Spleen (tissue), 13 donors: ENCODE measurements at regions of chr3 and their contacts with region 1.

Region 1: DNA sequence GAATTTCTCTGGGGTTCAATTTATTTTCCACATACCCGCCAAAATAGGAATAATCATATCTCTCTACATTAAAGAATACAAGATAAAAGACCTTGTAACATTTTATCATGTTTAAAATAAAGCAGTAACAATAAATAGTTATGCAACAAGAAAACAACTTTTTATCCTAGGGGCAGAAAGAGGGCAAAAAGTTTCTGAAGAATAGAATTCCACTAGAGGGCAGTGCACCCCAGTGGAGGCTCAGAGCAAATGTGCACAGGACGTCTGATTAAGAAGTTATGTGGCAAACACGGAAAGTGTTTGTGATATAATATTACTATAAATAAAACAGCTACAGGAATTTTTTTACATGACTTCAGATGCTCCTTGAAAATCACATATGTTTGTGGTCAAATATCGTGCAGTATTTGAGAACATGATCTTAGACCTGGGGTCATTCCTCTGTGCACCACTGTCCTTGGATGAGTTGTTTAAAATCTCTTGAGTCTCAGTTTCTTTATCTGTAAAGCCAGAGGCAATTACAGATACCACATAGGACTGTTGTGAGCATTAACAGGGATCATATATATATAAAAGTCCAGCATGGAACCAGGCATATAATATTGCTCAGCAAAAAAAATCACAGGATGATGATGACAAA is 13.2 kb upstream of the PIK3R4 start:
- DNase-seq: no peak
- H3K4me3 ChIP-seq: no peak overlapping the region
- H3K27ac ChIP-seq: no peak overlapping the region
- H3K4me1 ChIP-seq: peaks cover 0 to 8% (median 2%) of the 10 kb centered on the region in 6 donors
- H3K27me3 ChIP-seq: no peaks in the 10 kb centered on the region
- CTCF ChIP-seq: peak in 10 of 11 experiments; percentile 33 to 79 (median 72)
- POLR2A ChIP-seq: no peak

Region 2: GRCh38 chr3:130892759-130893375 is 133.0 kb after region 1 on chr3:
- intact Hi-C with region 1: loop called (anchors 5 kb)
- DNase-seq: no peak
- H3K4me3 ChIP-seq: peak overlapping the region; percentile 69 to 86 (median 76)
- H3K27ac ChIP-seq: peak overlapping the region; percentile 97 to 99 (median 98)
- H3K4me1 ChIP-seq: peaks cover 4 to 39% (median 34%) of the 10 kb centered on the region in 6 donors
- H3K27me3 ChIP-seq: no peaks in the 10 kb centered on the region
- CTCF ChIP-seq: peak; percentile 43 to 86 (median 80)
- POLR2A ChIP-seq: no peak